Endothelial cell of umbilical vein (primary cell): ENCODE measurements at regions of chr3 and their contacts with region 1.

Region 1: DNA sequence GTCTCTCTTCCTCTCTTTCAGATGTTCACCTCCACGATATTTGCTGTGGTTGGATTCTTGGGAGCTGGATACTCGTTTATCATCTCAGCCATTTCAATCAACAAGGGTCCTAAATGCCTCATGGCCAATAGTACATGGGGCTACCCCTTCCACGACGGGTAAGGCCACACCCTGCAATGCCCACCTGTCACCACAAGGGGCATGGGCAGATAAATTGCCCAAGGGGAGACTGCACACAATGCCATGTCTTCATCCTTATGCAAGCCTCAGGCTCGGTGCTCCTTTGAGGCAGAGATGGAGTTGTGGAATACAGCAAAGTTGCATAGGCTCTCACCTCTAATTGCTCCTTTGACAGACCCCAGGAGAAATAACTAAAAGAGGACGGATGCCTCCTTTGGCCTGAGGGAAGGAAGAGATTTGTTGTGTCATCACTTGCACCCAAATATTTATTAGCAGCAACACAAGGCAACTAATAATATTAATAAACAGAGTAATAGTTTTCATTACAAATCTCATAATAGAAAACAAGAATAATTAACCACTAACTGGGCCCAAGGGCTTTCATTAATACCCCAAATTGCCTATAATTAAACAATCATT is 13.2 kb downstream of the TM4SF4 start:
- DNase-seq: no peak
- H3K4me3 ChIP-seq: no peak overlapping the region
- H3K27ac ChIP-seq: no peak overlapping the region
- H3K4me1 ChIP-seq: peaks cover 3% of the 10 kb centered on the region
- H3K27me3 ChIP-seq: no peaks in the 10 kb centered on the region
- CTCF ChIP-seq: peak; percentile 40 to 53
- POLR2A ChIP-seq: no peak

Region 2: GRCh38 chr3:149352556-149352955 is 135.1 kb before region 1 on chr3:
- CTCF ChIA-PET with region 1: interaction called, 10 read pairs
- POLR2A ChIA-PET with region 1: no interaction called
- dilution Hi-C with region 1: no loop called
- intact Hi-C with region 1: loop called (anchors 1 kb)
- DNase-seq: peak; percentile 70
- H3K4me3 ChIP-seq: no peak overlapping the region
- H3K27ac ChIP-seq: no peak overlapping the region
- H3K4me1 ChIP-seq: peaks cover 12% of the 10 kb centered on the region
- H3K27me3 ChIP-seq: no peaks in the 10 kb centered on the region
- CTCF ChIP-seq: peak; percentile 74
- POLR2A ChIP-seq: no peak

Region 3: DNA sequence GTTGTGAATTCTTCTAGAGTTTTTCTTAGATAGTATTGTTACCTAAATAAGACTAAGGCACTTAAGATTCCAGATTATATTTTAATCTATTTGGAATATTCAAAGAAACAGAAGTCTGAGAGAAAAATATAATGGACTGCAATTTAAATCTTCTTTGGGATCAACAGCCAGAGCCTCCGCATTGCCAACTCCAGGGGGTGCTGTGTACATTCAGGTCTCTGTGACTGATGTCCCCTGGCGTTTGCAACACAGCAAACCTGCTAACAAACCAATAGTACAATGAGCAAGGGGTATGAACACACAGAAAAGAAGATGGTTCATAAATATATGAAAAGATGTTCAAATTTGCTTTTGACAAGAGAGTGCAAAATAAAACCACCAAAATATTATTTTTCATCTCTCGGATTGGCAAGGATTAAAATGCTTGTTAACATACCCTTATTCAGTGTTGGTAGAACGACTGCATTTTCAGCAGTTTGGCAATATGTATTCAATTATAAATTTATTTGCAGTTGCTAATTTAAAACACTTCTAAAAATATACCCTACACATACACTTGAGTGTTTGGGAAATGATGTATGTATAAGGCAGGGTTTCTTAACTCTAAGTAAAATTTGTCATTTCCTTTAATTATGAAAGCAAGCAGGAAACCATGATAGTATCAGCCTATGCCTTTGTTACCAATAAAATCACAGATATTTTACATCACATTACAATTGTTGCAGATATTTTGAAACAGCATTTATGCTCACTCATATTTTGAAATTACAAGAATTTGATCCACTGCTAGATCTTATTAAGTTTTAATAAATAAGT is 94.1 kb before region 1 on chr3:
- CTCF ChIA-PET with region 1: interaction called, 8 read pairs
- POLR2A ChIA-PET with region 1: no interaction called
- dilution Hi-C with region 1: no loop called
- intact Hi-C with region 1: loop called (anchors 1 kb)
- DNase-seq: peak; percentile 88
- H3K4me3 ChIP-seq: peak overlapping the region in 1 of 3 experiments; percentile 21
- H3K27ac ChIP-seq: peak overlapping the region; percentile 90
- H3K4me1 ChIP-seq: peaks cover 31% of the 10 kb centered on the region
- H3K27me3 ChIP-seq: no peaks in the 10 kb centered on the region
- CTCF ChIP-seq: peak; percentile 84
- POLR2A ChIP-seq: no peak

Region 4: GRCh38 chr3:149473357-149474249 is 14.1 kb before region 1 on chr3:
- CTCF ChIA-PET with region 1: interaction called, 31 read pairs
- POLR2A ChIA-PET with region 1: no interaction called
- dilution Hi-C with region 1: no loop called
- intact Hi-C with region 1: no loop called
- DNase-seq: peak; percentile 17
- H3K4me3 ChIP-seq: no peak overlapping the region
- H3K27ac ChIP-seq: no peak overlapping the region
- H3K4me1 ChIP-seq: peaks cover 22% of the 10 kb centered on the region
- H3K27me3 ChIP-seq: no peaks in the 10 kb centered on the region
- CTCF ChIP-seq: no peak
- POLR2A ChIP-seq: no peak

Region 5: GRCh38 chr3:150421799-150422548 is 934.3 kb after region 1 on chr3:
- CTCF ChIA-PET with region 1: no interaction called
- POLR2A ChIA-PET with region 1: no interaction called
- dilution Hi-C with region 1: no loop called
- intact Hi-C with region 1: no loop called
- DNase-seq: no peak
- H3K4me3 ChIP-seq: no peak overlapping the region
- H3K27ac ChIP-seq: no peak overlapping the region
- H3K4me1 ChIP-seq: peaks cover 26% of the 10 kb centered on the region
- H3K27me3 ChIP-seq: no peaks in the 10 kb centered on the region
- CTCF ChIP-seq: no peak
- POLR2A ChIP-seq: no peak